ENCODE measurements at regions of chr1 and their contacts with region 1.

Region 1: DNA sequence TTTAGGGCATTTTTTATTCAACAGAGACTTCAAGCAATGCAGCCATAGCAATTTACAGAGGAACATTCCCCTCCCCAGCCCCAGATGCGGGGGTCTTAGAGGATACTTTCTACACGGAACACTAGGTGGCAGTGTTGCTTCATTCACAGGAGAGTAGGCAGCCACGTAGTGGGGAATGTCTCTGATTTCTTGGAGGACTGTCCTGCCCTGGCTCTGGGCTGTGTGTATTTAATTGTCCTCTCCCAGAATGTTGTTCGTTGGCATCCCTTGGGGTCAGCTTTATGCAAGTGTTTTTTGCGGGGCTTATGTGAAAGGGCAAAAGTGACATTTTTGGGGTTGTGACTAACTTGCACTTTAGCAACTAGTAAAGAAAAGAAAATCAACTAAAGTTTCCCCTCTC is 96.9 kb downstream of the PAPPA2 start:
- DNase-seq: peak; percentile 32
- ATAC-seq: no peak
- H3K4me3 ChIP-seq: no peak overlapping the region
- H3K4me3 Mint-ChIP-seq: no peak overlapping the region
- H3K27ac ChIP-seq: no peak overlapping the region
- H3K27ac Mint-ChIP-seq: no peak overlapping the region
- H3K4me1 ChIP-seq: no peaks in the 10 kb centered on the region
- H3K4me1 Mint-ChIP-seq: peaks cover 2% of the 10 kb centered on the region
- H3K27me3 ChIP-seq: no peaks in the 10 kb centered on the region
- H3K27me3 Mint-ChIP-seq: peaks cover 30% of the 10 kb centered on the region
- CTCF ChIP-seq: peak; percentile 72

Region 2: GRCh38 chr1:176541663-176542062 is 18.2 kb before region 1 on chr1:
- CTCF ChIA-PET with region 1: no interaction called
- POLR2A ChIA-PET with region 1: no interaction called
- intact Hi-C with region 1: no loop called
- DNase-seq: no peak
- ATAC-seq: no peak
- H3K4me3 ChIP-seq: no peak overlapping the region
- H3K4me3 Mint-ChIP-seq: no peak overlapping the region
- H3K27ac ChIP-seq: no peak overlapping the region
- H3K27ac Mint-ChIP-seq: no peak overlapping the region
- H3K4me1 ChIP-seq: no peaks in the 10 kb centered on the region
- H3K4me1 Mint-ChIP-seq: no peaks in the 10 kb centered on the region
- H3K27me3 ChIP-seq: no peaks in the 10 kb centered on the region
- H3K27me3 Mint-ChIP-seq: peaks cover 9% of the 10 kb centered on the region
- CTCF ChIP-seq: no peak

Region 3: DNA sequence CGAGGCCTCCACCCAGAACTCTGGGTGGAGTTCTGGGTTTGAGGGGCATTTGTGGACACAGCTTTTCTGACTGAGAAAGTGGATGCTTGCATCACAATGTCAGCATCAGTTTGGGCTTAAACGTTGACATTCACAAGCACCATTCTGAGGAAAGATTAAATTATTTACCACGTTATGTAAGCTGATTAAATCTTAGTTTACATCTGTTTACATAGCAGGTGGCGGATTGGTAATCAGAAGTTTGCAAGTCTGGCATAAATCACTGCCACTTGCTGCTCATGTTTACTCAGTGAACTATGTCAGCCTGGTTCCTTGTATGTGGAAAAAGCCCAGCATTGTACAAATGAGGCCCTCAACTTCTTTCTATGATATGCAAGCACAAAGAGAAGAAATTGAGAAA is 213.2 kb after region 1 on chr1:
- CTCF ChIA-PET with region 1: no interaction called
- POLR2A ChIA-PET with region 1: no interaction called
- intact Hi-C with region 1: no loop called
- DNase-seq: no peak
- ATAC-seq: no peak
- H3K4me3 ChIP-seq: no peak overlapping the region
- H3K4me3 Mint-ChIP-seq: no peak overlapping the region
- H3K27ac ChIP-seq: no peak overlapping the region
- H3K27ac Mint-ChIP-seq: no peak overlapping the region
- H3K4me1 ChIP-seq: no peaks in the 10 kb centered on the region
- H3K4me1 Mint-ChIP-seq: no peaks in the 10 kb centered on the region
- H3K27me3 ChIP-seq: no peaks in the 10 kb centered on the region
- H3K27me3 Mint-ChIP-seq: no peaks in the 10 kb centered on the region
- CTCF ChIP-seq: no peak

Region 4: GRCh38 chr1:176880954-176881595 is 321.2 kb after region 1 on chr1:
- CTCF ChIA-PET with region 1: no interaction called
- POLR2A ChIA-PET with region 1: no interaction called
- intact Hi-C with region 1: loop called (anchors 2 kb)
- DNase-seq: peak; percentile 48
- ATAC-seq: no peak
- H3K4me3 ChIP-seq: no peak overlapping the region
- H3K4me3 Mint-ChIP-seq: no peak overlapping the region
- H3K27ac ChIP-seq: no peak overlapping the region
- H3K27ac Mint-ChIP-seq: no peak overlapping the region
- H3K4me1 ChIP-seq: no peaks in the 10 kb centered on the region
- H3K4me1 Mint-ChIP-seq: no peaks in the 10 kb centered on the region
- H3K27me3 ChIP-seq: no peaks in the 10 kb centered on the region
- H3K27me3 Mint-ChIP-seq: no peaks in the 10 kb centered on the region
- CTCF ChIP-seq: peak; percentile 77

Region 5: GRCh38 chr1:177948336-177948972 is 1388.6 kb after region 1 on chr1:
- CTCF ChIA-PET with region 1: no interaction called
- POLR2A ChIA-PET with region 1: no interaction called
- intact Hi-C with region 1: loop called (anchors 5 kb)
- DNase-seq: peak; percentile 27
- ATAC-seq: no peak
- H3K4me3 ChIP-seq: no peak overlapping the region
- H3K4me3 Mint-ChIP-seq: no peak overlapping the region
- H3K27ac ChIP-seq: no peak overlapping the region
- H3K27ac Mint-ChIP-seq: no peak overlapping the region
- H3K4me1 ChIP-seq: no peaks in the 10 kb centered on the region
- H3K4me1 Mint-ChIP-seq: no peaks in the 10 kb centered on the region
- H3K27me3 ChIP-seq: no peaks in the 10 kb centered on the region
- H3K27me3 Mint-ChIP-seq: peaks cover 10% of the 10 kb centered on the region
- CTCF ChIP-seq: peak; percentile 76

Measured in B cell (primary cell).